ENCODE measurements at regions of chr10 and their contacts with region 1.

Region 1: DNA sequence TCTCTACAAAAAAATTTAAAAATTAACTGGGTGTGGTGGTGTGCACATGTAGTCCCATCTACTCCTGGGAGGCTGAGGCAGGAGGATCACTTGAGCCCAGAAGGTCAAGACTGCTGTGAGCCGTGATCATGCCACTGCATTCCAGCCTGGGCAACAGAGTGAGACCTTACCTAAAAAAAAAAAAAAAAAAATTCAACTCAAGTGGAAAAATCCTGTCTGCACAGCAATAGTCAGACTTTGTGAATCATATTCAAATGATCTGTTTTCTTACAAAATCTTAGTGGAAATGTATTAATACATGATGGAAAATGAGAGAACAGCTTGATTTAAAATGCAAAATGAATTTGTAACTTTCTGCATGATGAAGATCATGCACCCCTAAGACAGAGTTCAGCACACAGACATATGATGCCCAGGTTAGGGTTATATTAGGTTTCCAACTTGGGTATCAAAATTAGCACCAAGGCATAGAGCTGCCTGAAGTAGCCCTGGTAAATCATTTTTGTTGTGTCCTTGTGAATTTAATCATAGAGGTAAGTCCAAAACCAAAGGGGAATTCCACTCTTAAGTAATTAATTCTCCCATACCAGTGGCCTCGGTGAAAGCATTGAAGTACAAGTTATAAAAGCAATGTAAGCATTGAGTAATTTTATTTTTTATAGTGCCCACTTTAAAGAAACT is 93.8 kb downstream of the ADD3 start:
- DNase-seq: no peak
- H3K4me3 Mint-ChIP-seq: peak overlapping the region; percentile 29
- H3K27ac Mint-ChIP-seq: peak overlapping the region; percentile 91
- H3K4me1 Mint-ChIP-seq: peaks cover 69% of the 10 kb centered on the region
- H3K27me3 Mint-ChIP-seq: no peaks in the 10 kb centered on the region

Region 2: GRCh38 chr10:110081911-110082310 is 19.7 kb before region 1 on chr10:
- CTCF ChIA-PET with region 1: interaction called, 4 read pairs
- POLR2A ChIA-PET with region 1: interaction called, 3 read pairs
- intact Hi-C with region 1: loop called (anchors 1 kb)
- DNase-seq: no peak
- H3K4me3 Mint-ChIP-seq: peak overlapping the region; percentile 45
- H3K27ac Mint-ChIP-seq: peak overlapping the region; percentile 92
- H3K4me1 Mint-ChIP-seq: peaks cover 87% of the 10 kb centered on the region
- H3K27me3 Mint-ChIP-seq: no peaks in the 10 kb centered on the region

Region 3: DNA sequence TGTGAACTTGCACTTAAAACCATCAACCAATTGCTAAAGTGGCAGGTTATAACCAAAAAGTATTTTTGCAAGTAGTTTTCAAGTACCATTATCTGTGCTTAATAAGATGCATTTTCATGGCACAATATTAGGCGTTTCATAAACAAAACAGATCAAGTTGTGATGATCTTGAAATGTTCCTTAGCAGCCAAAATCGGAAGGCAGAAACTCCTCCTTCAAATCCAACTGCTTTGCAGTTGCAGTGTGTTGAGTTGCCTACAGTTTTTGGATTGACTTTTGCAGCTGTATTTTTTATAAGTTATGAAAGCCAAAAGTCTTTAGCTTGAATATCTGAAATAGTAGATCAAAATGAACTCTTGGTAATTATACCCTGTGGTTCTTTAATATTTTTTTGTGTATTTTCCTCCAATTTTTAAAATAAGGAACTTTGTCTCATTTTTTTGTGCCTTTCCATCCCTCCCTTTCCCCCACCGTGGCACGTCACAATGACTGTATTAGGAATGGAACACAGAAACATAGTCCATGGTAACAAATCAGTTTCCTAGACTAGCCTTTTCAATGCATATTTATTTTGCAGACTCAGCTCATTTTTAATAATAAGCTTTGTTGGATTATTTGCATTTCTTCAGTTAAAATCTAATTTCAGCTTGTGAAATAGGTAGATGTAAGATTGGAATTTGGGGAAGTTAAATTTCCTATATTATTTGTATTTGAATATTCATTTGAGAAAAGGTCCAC is 13.1 kb before region 1 on chr10:
- CTCF ChIA-PET with region 1: interaction called, 3 read pairs
- POLR2A ChIA-PET with region 1: interaction called, 3 read pairs
- intact Hi-C with region 1: loop called (anchors 1 kb)
- DNase-seq: no peak
- H3K4me3 Mint-ChIP-seq: no peak overlapping the region
- H3K27ac Mint-ChIP-seq: peak overlapping the region; percentile 96
- H3K4me1 Mint-ChIP-seq: peaks cover 76% of the 10 kb centered on the region
- H3K27me3 Mint-ChIP-seq: no peaks in the 10 kb centered on the region